ENCODE measurements at regions of chr17 and their contacts with region 1.

Region 1: GRCh38 chr17:20852239-20852989 is 190.4 kb downstream of the USP22 start:
- DNase-seq: peak; percentile 25
- H3K4me3 Mint-ChIP-seq: peak overlapping the region; percentile 50
- H3K27ac Mint-ChIP-seq: no peak overlapping the region
- H3K4me1 Mint-ChIP-seq: peaks cover 15% of the 10 kb centered on the region
- H3K27me3 Mint-ChIP-seq: peaks cover 48% of the 10 kb centered on the region

Region 2: GRCh38 chr17:20797292-20797691 is 55.1 kb before region 1 on chr17:
- CTCF ChIA-PET with region 1: no interaction called
- POLR2A ChIA-PET with region 1: no interaction called
- intact Hi-C with region 1: loop called (anchors 1 kb)
- DNase-seq: no peak
- H3K4me3 Mint-ChIP-seq: no peak overlapping the region
- H3K27ac Mint-ChIP-seq: peak overlapping the region; percentile 53
- H3K4me1 Mint-ChIP-seq: peaks cover 11% of the 10 kb centered on the region
- H3K27me3 Mint-ChIP-seq: no peaks in the 10 kb centered on the region

Region 3: DNA sequence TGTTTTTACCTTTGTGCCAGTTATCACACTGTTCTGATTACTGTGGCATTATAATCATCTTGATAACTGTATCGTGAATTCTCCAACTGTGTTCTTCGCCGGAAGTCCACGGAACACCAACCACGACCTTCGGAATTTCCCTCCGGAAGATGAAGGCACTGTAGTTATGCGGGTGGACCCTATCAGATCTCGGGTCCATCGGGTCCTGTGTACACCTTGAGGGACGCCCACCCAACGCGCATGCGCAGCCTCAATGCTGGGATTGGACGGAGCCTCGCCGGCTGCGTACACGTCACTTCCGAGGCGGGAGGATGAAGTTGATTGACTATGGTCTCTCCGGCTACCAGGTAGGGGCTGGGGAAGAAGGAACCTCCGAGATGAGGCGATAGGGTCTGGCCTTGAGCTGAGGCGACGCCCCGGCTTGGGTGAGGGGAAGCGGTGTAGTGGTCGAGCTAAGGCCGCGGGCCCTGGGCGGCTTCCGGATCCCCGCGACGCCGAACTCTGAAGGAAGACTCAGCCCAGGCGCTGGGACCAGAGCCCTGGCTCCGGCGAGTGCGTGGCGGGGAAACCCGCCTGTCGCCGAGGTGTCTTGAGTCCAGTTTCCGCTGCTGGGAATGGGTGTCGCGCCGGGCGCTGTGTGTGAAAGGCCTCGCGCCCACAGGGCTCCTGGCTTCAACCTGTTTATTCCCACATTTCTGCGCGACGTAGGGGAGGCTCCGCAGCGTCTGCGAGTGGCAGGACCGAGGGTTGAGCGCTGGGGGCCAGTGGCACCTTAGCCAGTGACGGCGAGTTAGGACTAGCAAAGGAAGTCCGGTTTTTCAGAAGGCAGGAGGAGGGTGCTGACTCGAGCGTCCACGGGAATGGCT is 274.5 kb after region 1 on chr17 and contains the start of gene DHRS7B:
- CTCF ChIA-PET with region 1: no interaction called
- POLR2A ChIA-PET with region 1: no interaction called
- intact Hi-C with region 1: no loop called
- DNase-seq: peak; percentile 98
- H3K4me3 Mint-ChIP-seq: peak within 1 kb of the TSS; percentile 90
- H3K27ac Mint-ChIP-seq: peak within 1 kb of the TSS; percentile 88
- H3K4me1 Mint-ChIP-seq: peaks cover 31% of the 10 kb centered on the region
- H3K27me3 Mint-ChIP-seq: peaks cover 1% of the 10 kb centered on the region
- total RNA-seq, gene DHRS7B: 13.5 to 15.9 TPM

Measured in activated CD4-positive, alpha-beta memory T cell treated with anti-CD3 and anti-CD28 coated beads for 36 hours (primary cell).